CD4-positive, alpha-beta T cell (primary cell): ENCODE measurements at regions of chr12 and their contacts with region 1.

Region 1: DNA sequence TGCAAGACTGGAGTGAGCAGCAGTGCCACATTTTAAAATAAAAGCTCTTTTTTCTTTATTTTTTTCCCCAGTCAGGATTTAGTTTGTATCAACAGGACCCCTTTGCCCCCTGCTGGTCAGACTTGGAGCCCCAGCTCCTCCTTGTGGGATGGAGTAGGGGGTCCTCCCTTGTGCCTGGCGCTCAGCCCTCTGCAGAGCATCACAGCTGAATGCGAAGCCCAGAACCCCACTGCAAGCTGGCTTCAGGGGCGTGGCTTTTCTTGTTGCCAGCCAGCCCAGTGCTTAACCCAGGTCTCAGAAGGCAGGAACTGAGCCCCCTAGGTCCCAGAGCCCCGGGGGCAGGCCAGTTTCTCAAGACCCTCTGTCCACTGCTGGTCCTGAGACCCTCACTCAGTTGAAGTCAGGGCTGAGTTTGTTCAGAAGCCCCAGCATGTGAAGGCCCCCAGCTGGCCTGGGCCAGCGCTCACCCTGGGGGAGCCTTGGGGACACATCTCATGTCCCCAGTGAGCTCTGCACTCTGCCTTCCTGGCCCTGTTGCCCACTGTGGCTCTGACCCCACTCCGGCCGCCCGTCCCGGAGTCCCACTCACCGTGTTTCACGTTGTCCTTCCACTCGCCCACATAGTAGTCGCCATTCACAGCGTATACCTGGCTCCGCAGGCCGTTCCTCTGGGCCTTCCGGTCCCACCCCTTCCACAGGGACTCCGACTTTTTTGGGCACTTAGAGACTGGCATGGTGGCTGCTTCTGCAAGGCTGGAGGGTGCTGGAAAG is 519 bp downstream of the MORN3 start:
- DNase-seq: peak; percentile 38 to 81 (median 59)
- ATAC-seq: no peak
- H3K4me3 ChIP-seq: no peak overlapping the region
- H3K4me3 Mint-ChIP-seq: peak overlapping the region; percentile 65
- H3K27ac ChIP-seq: no peak overlapping the region
- H3K27ac Mint-ChIP-seq: peak overlapping the region; percentile 83
- H3K4me1 ChIP-seq: peaks cover 83% of the 10 kb centered on the region
- H3K4me1 Mint-ChIP-seq: peaks cover 66% of the 10 kb centered on the region
- H3K27me3 ChIP-seq: no peaks in the 10 kb centered on the region
- H3K27me3 Mint-ChIP-seq: no peaks in the 10 kb centered on the region
- CTCF ChIP-seq: peak; percentile 77

Region 2: GRCh38 chr12:121252712-121253345 is 416.1 kb before region 1 on chr12:
- CTCF ChIA-PET with region 1: no interaction called
- POLR2A ChIA-PET with region 1: no interaction called
- intact Hi-C with region 1: no loop called
- DNase-seq: no peak
- ATAC-seq: no peak
- H3K4me3 ChIP-seq: no peak overlapping the region
- H3K4me3 Mint-ChIP-seq: no peak overlapping the region
- H3K27ac ChIP-seq: no peak overlapping the region
- H3K27ac Mint-ChIP-seq: no peak overlapping the region
- H3K4me1 ChIP-seq: no peaks in the 10 kb centered on the region
- H3K4me1 Mint-ChIP-seq: no peaks in the 10 kb centered on the region
- H3K27me3 ChIP-seq: no peaks in the 10 kb centered on the region
- H3K27me3 Mint-ChIP-seq: no peaks in the 10 kb centered on the region
- CTCF ChIP-seq: no peak

Region 3: DNA sequence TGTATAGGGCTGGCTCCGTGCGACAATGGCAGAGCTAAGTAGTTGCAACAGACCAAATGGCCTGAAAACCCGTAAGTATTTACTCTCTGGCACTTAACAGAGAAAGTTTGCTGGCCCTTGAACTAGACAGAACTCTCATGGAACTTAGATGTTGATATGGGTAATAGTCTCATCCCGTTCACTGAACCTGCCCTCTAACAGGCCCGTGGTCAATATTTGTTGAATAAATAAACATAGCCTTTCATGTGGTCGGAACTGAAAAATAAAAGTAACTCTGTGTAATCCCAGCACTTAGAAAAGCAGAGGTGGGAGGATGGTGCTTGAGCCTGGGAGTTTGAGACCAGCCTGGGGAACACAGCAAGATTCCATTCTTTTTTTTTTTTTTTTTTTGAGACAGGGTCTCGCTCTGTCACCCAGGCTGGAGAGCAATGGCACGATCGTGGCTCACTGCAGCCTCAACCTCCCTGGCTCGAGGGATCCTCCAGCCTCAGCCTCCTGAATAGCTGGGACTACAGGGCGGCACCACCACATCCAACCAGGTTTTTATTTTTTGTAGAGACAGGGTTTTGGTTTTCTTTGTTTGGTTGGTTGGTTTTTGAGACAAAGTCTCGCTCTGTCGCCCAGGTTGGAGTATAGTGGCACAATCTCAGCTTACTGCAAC is 117.8 kb before region 1 on chr12:
- CTCF ChIA-PET with region 1: interaction called, 76 read pairs
- POLR2A ChIA-PET with region 1: interaction called, 22 read pairs
- intact Hi-C with region 1: loop called (anchors 1 kb)
- DNase-seq: no peak
- ATAC-seq: no peak
- H3K4me3 ChIP-seq: no peak overlapping the region
- H3K4me3 Mint-ChIP-seq: no peak overlapping the region
- H3K27ac ChIP-seq: no peak overlapping the region
- H3K27ac Mint-ChIP-seq: no peak overlapping the region
- H3K4me1 ChIP-seq: peaks cover 5% of the 10 kb centered on the region
- H3K4me1 Mint-ChIP-seq: no peaks in the 10 kb centered on the region
- H3K27me3 ChIP-seq: no peaks in the 10 kb centered on the region
- H3K27me3 Mint-ChIP-seq: no peaks in the 10 kb centered on the region
- CTCF ChIP-seq: no peak

Region 4: DNA sequence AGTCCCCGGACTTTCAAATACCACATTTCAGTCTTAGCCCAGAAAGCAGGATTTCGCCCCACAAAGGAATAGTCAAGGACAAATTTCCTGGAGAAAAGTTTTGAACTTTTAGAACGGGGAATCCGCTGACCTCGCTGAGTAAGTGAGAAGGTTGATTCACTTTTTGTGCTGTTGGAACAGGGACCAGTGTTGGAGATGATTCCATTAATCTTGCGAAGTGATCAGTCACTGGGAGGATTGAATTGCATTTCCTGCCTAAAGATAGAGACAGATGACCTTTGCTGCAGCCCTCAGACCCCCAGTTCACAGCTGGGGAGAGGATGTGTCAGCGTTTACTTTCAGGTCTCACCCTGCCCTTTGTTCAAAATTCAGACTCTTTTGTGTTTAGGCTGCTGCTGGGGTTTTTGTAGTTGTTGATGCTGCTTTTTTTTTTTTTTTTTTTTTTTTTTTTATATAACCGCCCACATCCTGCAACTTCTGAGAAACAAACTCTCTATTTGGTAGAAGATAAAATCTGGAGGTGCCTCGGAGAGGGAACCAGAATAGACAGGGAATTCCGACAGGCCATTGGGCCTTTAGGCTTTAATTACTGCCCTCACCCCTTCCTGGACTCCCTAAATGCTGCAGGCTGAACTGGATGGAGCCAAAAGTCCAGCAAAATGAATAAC is 78.3 kb before region 1 on chr12:
- CTCF ChIA-PET with region 1: interaction called, 5 read pairs
- POLR2A ChIA-PET with region 1: interaction called, 20 read pairs
- intact Hi-C with region 1: no loop called
- DNase-seq: peak; percentile 50 to 91 (median 61)
- ATAC-seq: peak; percentile 70
- H3K4me3 ChIP-seq: peak overlapping the region; percentile 52
- H3K4me3 Mint-ChIP-seq: peak overlapping the region; percentile 92
- H3K27ac ChIP-seq: peak overlapping the region; percentile 86 to 94
- H3K27ac Mint-ChIP-seq: peak overlapping the region; percentile 99
- H3K4me1 ChIP-seq: peaks cover 45% of the 10 kb centered on the region
- H3K4me1 Mint-ChIP-seq: peaks cover 40% of the 10 kb centered on the region
- H3K27me3 ChIP-seq: no peaks in the 10 kb centered on the region
- H3K27me3 Mint-ChIP-seq: no peaks in the 10 kb centered on the region
- CTCF ChIP-seq: no peak

Region 5: DNA sequence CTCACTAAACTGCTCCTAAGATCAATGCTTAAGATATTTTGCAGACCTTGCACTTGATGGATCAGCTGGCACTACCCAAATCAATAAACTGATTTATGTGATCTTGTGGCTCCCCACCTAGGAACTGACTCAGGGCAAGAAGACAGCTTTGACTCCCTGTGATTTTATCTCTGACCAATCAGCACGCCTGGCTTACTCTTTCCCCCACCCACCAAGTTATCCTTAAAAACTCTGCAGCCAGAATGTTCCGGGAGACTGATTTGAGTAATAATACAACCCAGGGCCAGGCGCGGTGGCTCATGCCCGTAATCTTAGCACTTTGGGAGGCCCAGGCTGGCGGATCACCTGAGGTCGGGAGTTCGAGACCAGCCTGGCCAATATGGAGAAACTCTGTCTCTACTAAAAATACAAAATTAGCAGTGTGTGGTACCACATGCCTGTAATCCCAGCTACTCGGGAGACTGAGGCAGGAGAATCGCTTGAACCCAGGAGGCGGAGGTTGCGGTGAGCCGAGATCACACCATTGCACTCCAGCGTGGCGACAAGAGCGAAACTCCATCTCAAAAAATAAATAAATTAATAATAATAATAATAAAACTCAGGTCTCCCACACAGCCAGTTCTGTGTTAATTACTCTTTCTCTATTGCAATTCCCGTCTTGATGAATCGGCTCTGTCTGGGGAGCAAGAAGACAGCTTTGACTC is 11.5 kb before region 1 on chr12:
- CTCF ChIA-PET with region 1: interaction called, 20 read pairs
- POLR2A ChIA-PET with region 1: interaction called, 47 read pairs
- intact Hi-C with region 1: loop called in 1 of 2 experiments (anchors 1 kb)
- DNase-seq: peak in 1 of 14 experiments; percentile 18
- ATAC-seq: no peak
- H3K4me3 ChIP-seq: no peak overlapping the region
- H3K4me3 Mint-ChIP-seq: peak overlapping the region; percentile 72
- H3K27ac ChIP-seq: peak overlapping the region in 1 of 2 donors; percentile 29
- H3K27ac Mint-ChIP-seq: peak overlapping the region; percentile 94
- H3K4me1 ChIP-seq: peaks cover 67% of the 10 kb centered on the region
- H3K4me1 Mint-ChIP-seq: peaks cover 69% of the 10 kb centered on the region
- H3K27me3 ChIP-seq: no peaks in the 10 kb centered on the region
- H3K27me3 Mint-ChIP-seq: no peaks in the 10 kb centered on the region
- CTCF ChIP-seq: no peak

Region 6: DNA sequence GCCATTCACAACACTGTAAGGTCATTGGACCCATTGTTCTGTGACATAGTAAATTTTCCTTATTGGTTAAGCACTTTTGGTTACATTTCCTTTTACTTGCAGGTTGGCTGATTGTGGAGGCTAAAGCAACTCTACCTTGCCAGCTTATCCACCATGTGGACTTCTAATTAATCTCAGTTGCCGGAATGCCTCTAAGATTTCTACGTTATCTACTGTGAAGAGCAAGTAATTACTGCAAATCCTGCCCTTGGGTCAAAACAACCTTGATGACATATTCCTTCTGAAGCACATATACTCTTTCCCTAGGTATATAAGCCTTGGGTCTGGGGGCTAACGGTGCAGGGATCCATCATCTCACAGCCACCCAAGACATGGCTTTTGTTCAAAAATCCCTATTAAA is 20.0 kb after region 1 on chr12:
- CTCF ChIA-PET with region 1: interaction called, 5 read pairs
- POLR2A ChIA-PET with region 1: interaction called, 22 read pairs
- intact Hi-C with region 1: loop called in 1 of 2 experiments (anchors 2 kb)
- DNase-seq: no peak
- ATAC-seq: no peak
- H3K4me3 ChIP-seq: no peak overlapping the region
- H3K4me3 Mint-ChIP-seq: no peak overlapping the region
- H3K27ac ChIP-seq: no peak overlapping the region
- H3K27ac Mint-ChIP-seq: no peak overlapping the region
- H3K4me1 ChIP-seq: peaks cover 14% of the 10 kb centered on the region
- H3K4me1 Mint-ChIP-seq: peaks cover 12% of the 10 kb centered on the region
- H3K27me3 ChIP-seq: no peaks in the 10 kb centered on the region
- H3K27me3 Mint-ChIP-seq: no peaks in the 10 kb centered on the region
- CTCF ChIP-seq: no peak

Region 7: DNA sequence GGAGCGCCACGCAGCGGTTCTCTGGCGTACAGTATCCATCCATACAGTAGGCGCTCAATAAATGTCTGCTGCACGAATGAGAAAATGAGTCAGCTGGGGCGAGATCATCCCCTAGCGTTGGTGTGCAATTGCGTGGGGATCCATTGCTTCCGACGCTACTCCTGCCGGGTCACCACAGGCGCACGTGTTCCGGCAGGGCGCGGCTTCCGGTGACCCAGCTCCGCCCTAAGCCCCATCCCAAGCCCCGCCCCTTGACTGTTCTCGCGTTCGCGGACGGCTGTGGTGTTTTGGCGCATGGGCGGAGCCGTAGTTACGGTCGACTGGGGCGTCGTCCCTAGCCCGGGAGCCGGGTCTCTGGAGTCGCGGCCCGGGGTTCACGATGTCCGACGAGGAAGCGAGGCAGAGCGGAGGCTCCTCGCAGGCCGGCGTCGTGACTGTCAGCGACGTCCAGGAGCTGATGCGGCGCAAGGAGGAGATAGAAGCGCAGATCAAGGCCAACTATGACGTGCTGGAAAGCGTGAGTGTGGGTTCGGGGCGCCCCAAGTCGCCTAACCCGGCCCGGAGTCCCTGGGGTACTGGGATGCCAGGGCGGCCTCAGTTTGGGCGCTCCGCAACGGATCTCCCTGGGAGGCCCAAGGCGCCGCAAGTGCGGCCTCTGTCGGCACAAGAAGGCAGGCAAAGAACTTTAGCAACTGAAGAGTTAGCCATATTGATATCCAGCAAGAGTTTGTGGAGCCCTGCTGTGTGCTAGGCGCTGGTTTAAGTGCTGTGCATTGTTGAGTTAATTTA is 219.7 kb after region 1 on chr12 and contains the start of gene PSMD9:
- CTCF ChIA-PET with region 1: no interaction called
- POLR2A ChIA-PET with region 1: interaction called, 12 read pairs
- intact Hi-C with region 1: no loop called
- DNase-seq: peak; percentile 96 to 99 (median 98)
- ATAC-seq: peak; percentile 90
- H3K4me3 ChIP-seq: peak within 1 kb of the TSS; percentile 96
- H3K4me3 Mint-ChIP-seq: peak within 1 kb of the TSS; percentile 96
- H3K27ac ChIP-seq: peak within 1 kb of the TSS; percentile 86 to 97
- H3K27ac Mint-ChIP-seq: peak within 1 kb of the TSS; percentile 96
- H3K4me1 ChIP-seq: peaks cover 39% of the 10 kb centered on the region
- H3K4me1 Mint-ChIP-seq: peaks cover 32% of the 10 kb centered on the region
- H3K27me3 ChIP-seq: no peaks in the 10 kb centered on the region
- H3K27me3 Mint-ChIP-seq: no peaks in the 10 kb centered on the region
- CTCF ChIP-seq: peak; percentile 21
- total RNA-seq, gene PSMD9: 29.5 to 31.8 TPM